Caco-2 (cell line): ENCODE measurements at regions of chr4 and their contacts with region 1.

Region 1: GRCh38 chr4:9762823-9763475 is 18.5 kb upstream of the DRD5 start:
- DNase-seq: peak; percentile 63 to 72
- H3K4me3 ChIP-seq: no peak overlapping the region
- H3K4me3 Mint-ChIP-seq: no peak overlapping the region
- H3K27ac Mint-ChIP-seq: no peak overlapping the region
- H3K4me1 ChIP-seq: no peaks in the 10 kb centered on the region; the same call in 1 of the 2 replicates
- H3K4me1 Mint-ChIP-seq: no peaks in the 10 kb centered on the region
- H3K27me3 ChIP-seq: no peaks in the 10 kb centered on the region
- H3K27me3 Mint-ChIP-seq: peaks cover 10% of the 10 kb centered on the region
- CTCF ChIP-seq: peak; percentile 57 to 67

Region 2: DNA sequence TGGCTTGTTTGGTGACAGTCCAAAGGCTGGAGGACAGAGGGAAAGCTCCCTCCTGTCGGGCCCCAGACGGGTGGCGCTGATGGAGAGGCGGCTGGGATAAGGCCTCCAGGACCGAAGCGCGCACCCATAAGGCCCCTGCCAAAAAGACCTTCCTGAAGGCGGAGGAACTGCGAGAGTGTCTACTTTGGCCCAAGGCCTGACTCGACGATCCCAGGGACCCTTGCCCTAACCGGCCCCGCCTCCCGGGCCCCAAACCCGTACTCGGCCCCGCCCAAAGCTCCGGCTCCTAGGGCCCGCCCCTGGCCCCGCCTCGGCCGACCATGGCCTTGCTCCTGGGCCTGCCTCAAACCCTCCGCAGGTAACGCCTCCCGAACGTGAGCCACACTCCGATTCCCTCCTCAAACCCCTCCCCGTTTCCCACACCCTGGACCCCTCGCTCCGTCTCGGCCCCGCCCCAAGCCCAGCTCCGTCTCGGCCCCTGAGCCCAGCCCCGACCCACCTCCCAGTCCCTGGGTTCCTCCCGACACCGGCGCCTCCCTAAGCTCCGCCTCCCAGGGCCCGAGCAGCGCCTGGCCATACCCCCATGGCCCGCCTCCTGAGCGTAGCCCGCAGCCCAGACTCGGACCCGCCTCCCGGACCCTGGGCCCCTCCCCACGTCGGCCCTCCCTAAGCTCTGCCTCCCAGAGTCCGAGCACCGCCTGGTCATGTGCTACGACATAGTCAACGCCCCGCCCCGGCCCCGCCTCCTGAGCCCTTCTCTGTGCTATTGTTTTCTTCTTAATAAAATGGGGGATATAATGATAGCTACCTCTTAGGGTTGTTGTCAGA is 71.5 kb before region 1 on chr4:
- CTCF ChIA-PET with region 1: no interaction called
- POLR2A ChIA-PET with region 1: no interaction called
- intact Hi-C with region 1: loop called (anchors 10 kb)
- DNase-seq: peak; percentile 96
- H3K4me3 ChIP-seq: peak overlapping the region; percentile 37
- H3K4me3 Mint-ChIP-seq: peak overlapping the region; percentile 73
- H3K27ac Mint-ChIP-seq: peak overlapping the region; percentile 68
- H3K4me1 ChIP-seq: no peaks in the 10 kb centered on the region
- H3K4me1 Mint-ChIP-seq: peaks cover 6% of the 10 kb centered on the region
- H3K27me3 ChIP-seq: no peaks in the 10 kb centered on the region
- H3K27me3 Mint-ChIP-seq: no peaks in the 10 kb centered on the region
- CTCF ChIP-seq: no peak

Region 3: GRCh38 chr4:9898596-9899305 is 135.8 kb after region 1 on chr4:
- CTCF ChIA-PET with region 1: interaction called, 5 read pairs
- POLR2A ChIA-PET with region 1: no interaction called
- intact Hi-C with region 1: loop called (anchors 1 kb)
- DNase-seq: peak; percentile 57 to 58
- H3K4me3 ChIP-seq: no peak overlapping the region
- H3K4me3 Mint-ChIP-seq: no peak overlapping the region
- H3K27ac Mint-ChIP-seq: no peak overlapping the region
- H3K4me1 ChIP-seq: no peaks in the 10 kb centered on the region
- H3K4me1 Mint-ChIP-seq: no peaks in the 10 kb centered on the region
- H3K27me3 ChIP-seq: no peaks in the 10 kb centered on the region
- H3K27me3 Mint-ChIP-seq: no peaks in the 10 kb centered on the region
- CTCF ChIP-seq: peak; percentile 22 to 49

Region 4: DNA sequence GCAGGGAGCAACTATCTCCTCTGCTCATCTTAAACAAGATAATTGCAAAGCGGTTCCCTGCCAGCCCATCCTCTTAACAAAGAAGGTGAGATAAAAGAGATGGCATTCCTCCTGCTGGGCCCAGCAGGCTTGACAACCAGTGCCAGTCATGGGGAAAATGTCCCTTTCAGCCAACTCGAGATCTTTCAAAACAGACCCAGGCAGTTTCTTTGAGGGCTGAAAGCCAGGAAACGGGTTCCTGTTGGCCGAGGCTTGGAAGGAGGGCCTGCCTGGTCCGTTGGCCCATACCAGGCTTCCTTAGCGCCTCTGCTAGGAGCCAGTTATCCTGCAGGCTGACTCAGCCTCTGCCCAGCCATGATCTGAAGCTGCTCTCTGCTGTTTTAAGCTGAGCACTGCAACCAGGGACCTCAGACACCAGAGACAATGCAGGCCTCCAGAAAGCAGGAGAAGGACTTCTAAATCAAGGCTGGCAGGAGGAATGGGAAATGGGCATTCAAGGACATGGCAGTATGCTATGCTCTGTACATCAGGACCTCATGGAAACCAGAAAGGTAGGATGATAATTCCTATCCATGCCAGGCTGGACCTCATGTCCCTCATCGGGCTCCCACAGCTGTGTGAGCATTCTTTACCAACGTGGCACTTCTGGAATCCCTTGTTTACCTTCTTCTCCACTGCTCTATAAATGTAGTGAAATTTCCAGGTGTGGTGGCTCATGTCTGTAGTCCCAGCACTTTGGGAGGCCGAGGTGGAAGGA is 300.8 kb after region 1 on chr4:
- CTCF ChIA-PET with region 1: interaction called, 3 read pairs
- POLR2A ChIA-PET with region 1: no interaction called
- intact Hi-C with region 1: loop called (anchors 1 kb)
- DNase-seq: peak; percentile 67 to 72
- H3K4me3 ChIP-seq: no peak overlapping the region
- H3K4me3 Mint-ChIP-seq: no peak overlapping the region
- H3K27ac Mint-ChIP-seq: no peak overlapping the region
- H3K4me1 ChIP-seq: no peaks in the 10 kb centered on the region; the same call in 1 of the 2 replicates
- H3K4me1 Mint-ChIP-seq: no peaks in the 10 kb centered on the region
- H3K27me3 ChIP-seq: no peaks in the 10 kb centered on the region
- H3K27me3 Mint-ChIP-seq: no peaks in the 10 kb centered on the region
- CTCF ChIP-seq: peak; percentile 56 to 79

Region 5: GRCh38 chr4:10157478-10158332 is 394.8 kb after region 1 on chr4:
- CTCF ChIA-PET with region 1: no interaction called
- POLR2A ChIA-PET with region 1: no interaction called
- intact Hi-C with region 1: loop called (anchors 5 kb)
- DNase-seq: peak; percentile 58 to 62
- H3K4me3 ChIP-seq: no peak overlapping the region
- H3K4me3 Mint-ChIP-seq: no peak overlapping the region
- H3K27ac Mint-ChIP-seq: no peak overlapping the region
- H3K4me1 ChIP-seq: peaks cover 7% of the 10 kb centered on the region
- H3K4me1 Mint-ChIP-seq: peaks cover 10% of the 10 kb centered on the region
- H3K27me3 ChIP-seq: no peaks in the 10 kb centered on the region
- H3K27me3 Mint-ChIP-seq: peaks cover 6% of the 10 kb centered on the region
- CTCF ChIP-seq: peak; percentile 77 to 79

Region 6: DNA sequence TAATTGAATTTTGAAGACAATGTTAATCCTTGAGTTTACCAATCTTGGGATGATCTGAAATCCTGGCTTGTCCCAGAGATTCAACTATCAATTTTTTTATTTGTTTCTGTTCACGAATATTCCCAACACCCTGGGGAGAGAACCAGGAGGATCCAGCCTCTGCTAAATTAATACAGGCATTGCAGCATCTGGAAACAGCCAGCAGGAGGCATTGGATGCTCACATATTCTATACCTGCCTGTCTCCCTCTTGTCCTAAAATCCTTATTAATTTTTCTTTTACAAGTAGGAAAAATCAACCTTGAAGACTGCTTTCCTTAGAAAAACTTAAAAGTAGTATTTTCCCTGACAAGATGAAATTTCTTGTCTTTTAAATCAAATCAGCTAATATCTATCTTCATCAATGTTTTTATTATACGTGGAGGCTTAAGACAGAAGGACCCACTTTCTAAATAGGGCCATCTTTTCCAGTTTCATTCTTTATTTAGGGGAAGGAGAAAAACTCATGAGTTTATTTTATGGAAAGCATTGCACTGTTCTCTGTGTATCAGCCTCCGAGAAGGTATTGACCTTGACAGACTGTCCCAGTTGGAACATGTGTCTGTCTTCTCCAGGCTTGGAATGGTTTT is 819.2 kb after region 1 on chr4:
- CTCF ChIA-PET with region 1: no interaction called
- POLR2A ChIA-PET with region 1: no interaction called
- intact Hi-C with region 1: no loop called
- DNase-seq: peak; percentile 46 to 47
- H3K4me3 ChIP-seq: no peak overlapping the region
- H3K4me3 Mint-ChIP-seq: no peak overlapping the region
- H3K27ac Mint-ChIP-seq: no peak overlapping the region
- H3K4me1 ChIP-seq: peaks cover 20% of the 10 kb centered on the region
- H3K4me1 Mint-ChIP-seq: peaks cover 9% of the 10 kb centered on the region
- H3K27me3 ChIP-seq: no peaks in the 10 kb centered on the region
- H3K27me3 Mint-ChIP-seq: no peaks in the 10 kb centered on the region
- CTCF ChIP-seq: peak; percentile 69 to 72